ENCODE measurements at regions of chr17 and their contacts with region 1.

Region 1: DNA sequence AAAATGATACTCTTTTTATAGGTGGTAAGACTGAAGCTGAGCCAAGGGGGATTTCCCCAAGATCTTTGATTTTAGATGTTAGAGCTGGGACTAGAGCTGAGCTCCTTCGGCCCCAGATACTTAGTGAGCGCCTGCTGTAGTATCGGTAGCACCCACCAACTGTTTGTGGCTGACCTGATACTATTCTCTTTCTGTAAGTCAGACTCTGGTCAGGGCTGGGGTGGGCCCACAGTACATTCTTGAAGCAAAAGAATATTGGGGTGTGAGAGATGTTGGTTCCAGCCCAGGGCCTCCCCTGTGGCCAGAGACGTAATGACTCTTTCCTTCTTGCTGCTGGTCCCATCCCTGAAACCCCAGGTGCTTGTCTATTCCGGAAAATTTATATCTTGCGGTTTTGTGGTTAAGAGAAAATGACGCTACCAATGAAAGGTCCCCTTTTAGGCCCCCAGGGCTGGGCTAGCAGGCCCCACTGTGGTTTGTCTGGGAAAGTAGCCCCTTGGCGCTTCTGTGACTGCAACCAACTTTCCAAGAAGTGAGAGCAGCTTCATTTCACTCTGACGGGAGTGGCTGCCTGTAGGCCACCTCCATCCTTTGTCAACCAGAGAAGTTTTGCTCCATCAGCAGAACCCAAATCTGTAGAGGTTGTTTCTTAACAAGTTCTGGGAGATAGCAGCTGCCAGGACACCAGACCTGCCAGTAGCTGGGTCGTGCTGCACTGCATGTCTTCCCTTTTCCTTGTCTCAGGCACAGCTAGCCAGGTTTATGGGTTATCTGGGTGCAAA is 86.4 kb upstream of the LGALS9 start:
- DNase-seq: peak; percentile 63
- ATAC-seq: no peak
- H3K4me3 ChIP-seq: no peak overlapping the region
- H3K27ac ChIP-seq: no peak overlapping the region
- H3K4me1 ChIP-seq: peaks cover 46% of the 10 kb centered on the region
- H3K27me3 ChIP-seq: no peaks in the 10 kb centered on the region
- CTCF ChIP-seq: no peak
- POLR2A ChIP-seq: no peak
- RAD21 ChIP-seq: no peak

Region 2: GRCh38 chr17:27494192-27495091 is 50.1 kb before region 1 on chr17:
- CTCF ChIA-PET with region 1: no interaction called
- POLR2A ChIA-PET with region 1: no interaction called
- dilution Hi-C with region 1: no loop called
- in situ Hi-C with region 1: loop called (anchors 5 kb)
- intact Hi-C with region 1: no loop called
- DNase-seq: peak; percentile 42
- ATAC-seq: 0 out of 2 replicates have a peak, but pooled peaks have one; percentile 13
- H3K4me3 ChIP-seq: no peak overlapping the region
- H3K27ac ChIP-seq: no peak overlapping the region
- H3K4me1 ChIP-seq: peaks cover 35% of the 10 kb centered on the region
- H3K27me3 ChIP-seq: no peaks in the 10 kb centered on the region
- CTCF ChIP-seq: peak; percentile 30; the same call in 1 of the 2 replicates
- POLR2A ChIP-seq: no peak
- RAD21 ChIP-seq: no peak

Region 3: GRCh38 chr17:27502526-27503324 is 41.8 kb before region 1 on chr17:
- CTCF ChIA-PET with region 1: no interaction called
- POLR2A ChIA-PET with region 1: no interaction called
- dilution Hi-C with region 1: no loop called
- in situ Hi-C with region 1: loop called (anchors 5 kb)
- intact Hi-C with region 1: loop called (anchors 5 kb)
- DNase-seq: peak; percentile 99
- ATAC-seq: peak; percentile 86
- H3K4me3 ChIP-seq: no peak overlapping the region
- H3K27ac ChIP-seq: peak overlapping the region; percentile 76
- H3K4me1 ChIP-seq: peaks cover 27% of the 10 kb centered on the region
- H3K27me3 ChIP-seq: no peaks in the 10 kb centered on the region
- CTCF ChIP-seq: no peak
- POLR2A ChIP-seq: peak; percentile 58
- RAD21 ChIP-seq: peak; percentile 23; the same call in 1 of the 2 replicates